Natural killer cell (primary cell): ENCODE measurements at regions of chr3 and their contacts with region 1.

Region 1: GRCh38 chr3:112519424-112520001 is 20.2 kb upstream of the BTLA start:
- DNase-seq: peak in 1 of 2 donors; percentile 80
- ATAC-seq: peak; percentile 72 to 85 (median 75)
- H3K4me3 ChIP-seq: no peak overlapping the region
- H3K4me3 Mint-ChIP-seq: no peak overlapping the region
- H3K27ac ChIP-seq: no peak overlapping the region
- H3K27ac Mint-ChIP-seq: no peak overlapping the region
- H3K4me1 ChIP-seq: peaks cover 2% of the 10 kb centered on the region
- H3K4me1 Mint-ChIP-seq: peaks cover 0 to 18% of the 10 kb centered on the region in 2 donors
- H3K27me3 ChIP-seq: no peaks in the 10 kb centered on the region
- H3K27me3 Mint-ChIP-seq: no peaks in the 10 kb centered on the region
- CTCF ChIP-seq: peak; percentile 76

Region 2: DNA sequence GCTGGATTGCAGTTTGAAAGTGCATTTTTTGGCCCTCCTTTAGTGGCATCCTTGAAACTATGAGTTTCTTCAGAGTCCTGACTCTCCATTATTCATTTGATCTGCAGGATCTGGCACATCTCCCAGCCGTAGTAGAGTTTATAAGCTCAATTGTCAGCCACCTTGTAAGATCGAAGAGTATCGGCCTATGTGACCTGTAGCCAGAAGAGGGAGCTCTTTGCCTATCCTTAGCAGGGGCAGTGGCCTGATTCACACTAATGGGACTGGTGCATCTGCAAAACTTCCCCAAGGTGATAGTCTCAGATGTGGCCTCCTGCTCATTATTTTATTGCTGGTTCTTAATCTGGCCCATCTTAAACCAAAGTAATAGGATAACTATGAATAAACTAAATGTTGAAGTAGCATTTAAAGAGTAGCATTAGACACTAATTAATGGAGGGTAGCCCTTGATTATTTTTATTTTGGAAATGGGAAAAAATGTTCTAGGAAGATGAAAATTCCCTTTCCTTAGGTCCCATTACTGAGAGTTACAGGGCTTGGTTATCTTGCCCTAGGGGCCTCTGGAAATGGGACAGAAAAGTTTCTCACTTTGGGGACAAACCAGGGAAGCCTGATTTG is 407.6 kb before region 1 on chr3:
- intact Hi-C with region 1: loop called (anchors 1 kb)
- DNase-seq: peak; percentile 23 to 86
- ATAC-seq: peak; percentile 81 to 90 (median 87)
- H3K4me3 ChIP-seq: no peak overlapping the region
- H3K4me3 Mint-ChIP-seq: no peak overlapping the region
- H3K27ac ChIP-seq: no peak overlapping the region
- H3K27ac Mint-ChIP-seq: no peak overlapping the region
- H3K4me1 ChIP-seq: peaks cover 12% of the 10 kb centered on the region
- H3K4me1 Mint-ChIP-seq: peaks cover 10 to 18% of the 10 kb centered on the region in 2 donors
- H3K27me3 ChIP-seq: no peaks in the 10 kb centered on the region
- H3K27me3 Mint-ChIP-seq: no peaks in the 10 kb centered on the region
- CTCF ChIP-seq: peak; percentile 62

Region 3: GRCh38 chr3:112293368-112294321 is 225.9 kb before region 1 on chr3 and contains the start of gene SLC9C1:
- intact Hi-C with region 1: loop called (anchors 1 kb)
- DNase-seq: peak in 1 of 2 donors; percentile 78
- ATAC-seq: peak; percentile 47 to 80 (median 75)
- H3K4me3 ChIP-seq: peak within 1 kb of the TSS; percentile 1
- H3K4me3 Mint-ChIP-seq: peak within 1 kb of the TSS; percentile 72
- H3K27ac ChIP-seq: no peak within 1 kb of the TSS
- H3K27ac Mint-ChIP-seq: peak within 1 kb of the TSS in 1 of 2 donors; percentile 72
- H3K4me1 ChIP-seq: peaks cover 9% of the 10 kb centered on the region
- H3K4me1 Mint-ChIP-seq: peaks cover 21 to 31% of the 10 kb centered on the region in 2 donors
- H3K27me3 ChIP-seq: no peaks in the 10 kb centered on the region
- H3K27me3 Mint-ChIP-seq: no peaks in the 10 kb centered on the region
- CTCF ChIP-seq: peak; percentile 46
- total RNA-seq, gene SLC9C1: not detected

Region 4: GRCh38 chr3:112327371-112327951 is 192.1 kb before region 1 on chr3:
- intact Hi-C with region 1: loop called (anchors 1 kb)
- DNase-seq: peak in 1 of 2 donors; percentile 81
- ATAC-seq: peak; percentile 84 to 96 (median 88)
- H3K4me3 ChIP-seq: no peak overlapping the region
- H3K4me3 Mint-ChIP-seq: no peak overlapping the region
- H3K27ac ChIP-seq: no peak overlapping the region
- H3K27ac Mint-ChIP-seq: no peak overlapping the region
- H3K4me1 ChIP-seq: no peaks in the 10 kb centered on the region
- H3K4me1 Mint-ChIP-seq: peaks cover 0 to 4% of the 10 kb centered on the region in 2 donors
- H3K27me3 ChIP-seq: peaks cover 7% of the 10 kb centered on the region
- H3K27me3 Mint-ChIP-seq: peaks cover 18 to 19% of the 10 kb centered on the region in 2 donors
- CTCF ChIP-seq: peak; percentile 64